ENCODE measurements at regions of chr6 and their contacts with region 1.

Region 1: DNA sequence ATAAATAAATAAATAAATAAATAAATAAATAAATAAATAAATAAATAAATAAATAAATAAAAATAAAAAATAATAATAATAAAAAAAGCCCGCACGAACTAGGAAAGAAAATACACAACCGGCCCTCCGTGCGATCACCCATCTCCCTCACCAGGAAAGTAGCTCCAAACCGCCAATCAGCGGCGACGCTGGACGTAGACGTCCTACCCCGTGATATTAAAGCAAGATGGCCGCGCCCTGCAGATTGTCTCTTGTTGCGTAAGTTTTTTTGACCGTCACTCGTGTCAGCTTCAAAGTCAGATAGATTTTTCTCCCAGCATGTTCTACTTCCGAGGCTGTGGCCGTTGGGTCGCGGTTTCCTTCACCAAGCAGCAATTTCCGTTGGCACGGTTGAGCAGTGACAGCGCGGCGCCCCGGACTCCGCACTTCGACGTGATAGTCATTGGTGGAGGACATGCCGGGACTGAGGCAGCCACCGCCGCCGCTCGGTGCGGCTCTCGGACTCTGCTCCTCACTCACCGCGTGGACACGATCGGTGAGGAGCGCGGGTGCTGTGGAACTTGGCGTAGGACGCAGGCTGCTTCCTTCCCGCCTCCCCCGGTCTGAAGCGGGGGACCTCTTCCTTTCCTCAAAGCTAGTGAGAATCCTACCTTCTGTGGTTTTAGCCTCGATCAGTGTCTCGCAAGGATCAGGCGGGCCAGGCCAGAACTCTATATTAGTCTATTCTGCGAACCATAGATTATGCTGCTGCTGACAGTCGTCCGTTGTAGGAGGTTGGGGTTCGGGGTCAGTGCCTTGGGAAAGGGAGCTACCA is at the start of gene MTO1:
- DNase-seq: peak; percentile 89
- H3K4me3 Mint-ChIP-seq: peak within 1 kb of the TSS; percentile 98
- H3K27ac Mint-ChIP-seq: peak within 1 kb of the TSS; percentile 99
- H3K4me1 Mint-ChIP-seq: peaks cover 54% of the 10 kb centered on the region
- H3K27me3 Mint-ChIP-seq: no peaks in the 10 kb centered on the region
- total RNA-seq, gene MTO1: 50.9 to 59.6 TPM

Region 2: DNA sequence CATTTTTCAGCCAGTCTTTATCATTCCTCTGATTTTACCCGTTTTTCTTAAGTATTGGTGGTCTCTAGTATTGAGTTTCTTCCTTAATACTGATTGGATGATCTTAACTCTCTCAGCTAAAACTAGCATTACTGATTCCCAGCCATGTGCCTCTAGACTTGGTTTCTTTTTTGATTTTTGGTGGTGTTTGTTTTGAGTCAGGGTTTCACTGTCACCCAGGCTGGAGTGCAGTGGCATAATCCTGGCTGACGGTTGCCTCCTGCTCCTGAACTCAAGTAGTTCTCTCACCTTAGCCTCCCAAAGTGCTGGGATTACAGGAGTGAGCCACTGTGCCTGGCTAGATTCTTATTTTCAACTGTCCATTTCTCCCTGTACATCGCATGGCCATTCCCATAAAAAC is 132.5 kb before region 1 on chr6:
- CTCF ChIA-PET with region 1: no interaction called
- POLR2A ChIA-PET with region 1: no interaction called
- DNase-seq: no peak
- H3K4me3 Mint-ChIP-seq: no peak overlapping the region
- H3K27ac Mint-ChIP-seq: no peak overlapping the region
- H3K4me1 Mint-ChIP-seq: peaks cover 7% of the 10 kb centered on the region
- H3K27me3 Mint-ChIP-seq: peaks cover 30% of the 10 kb centered on the region

Region 3: DNA sequence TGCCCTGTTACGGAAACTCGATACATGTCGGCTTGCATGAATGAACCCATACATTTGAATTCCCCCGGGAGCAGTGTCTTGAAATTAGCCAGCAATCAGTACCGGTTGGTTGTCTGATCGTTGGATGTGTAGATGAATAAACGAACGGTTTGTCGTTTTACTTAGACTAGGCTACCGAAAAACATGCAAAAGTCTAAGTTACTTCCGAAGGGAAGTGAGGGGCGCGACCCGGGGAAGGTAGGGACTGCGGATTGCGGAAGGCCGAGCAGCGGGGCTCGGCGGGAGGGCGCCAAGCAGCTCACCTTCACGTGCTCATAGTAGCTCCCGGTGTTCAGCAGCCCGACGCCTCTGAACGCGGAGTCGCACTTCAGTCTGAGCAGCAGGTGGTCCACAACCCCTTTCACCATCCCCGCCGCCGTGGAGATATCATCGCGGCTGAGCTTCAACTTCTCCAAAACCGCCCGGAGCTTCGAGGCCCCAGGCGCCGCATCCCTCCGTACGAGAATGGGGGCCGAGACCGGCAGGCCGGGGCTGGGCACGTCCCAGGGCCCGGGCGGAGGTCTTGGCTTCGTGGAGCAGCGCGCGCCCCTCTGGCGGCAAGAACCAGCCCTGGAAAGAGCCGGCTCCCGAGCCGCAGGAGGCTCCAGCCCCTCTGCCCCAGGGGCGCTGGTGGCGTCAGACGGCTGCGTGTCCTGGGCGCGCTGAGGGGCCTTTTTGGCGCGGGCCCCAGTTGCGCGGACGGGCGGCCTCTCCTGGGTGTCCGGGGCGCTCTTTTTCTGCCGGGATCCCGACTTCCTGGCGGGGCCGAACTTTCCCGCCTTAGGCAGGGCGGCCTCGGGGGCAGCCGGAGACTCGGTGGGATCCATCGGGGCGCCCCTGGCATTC is 10.3 kb before region 1 on chr6:
- CTCF ChIA-PET with region 1: interaction called, 21 read pairs
- POLR2A ChIA-PET with region 1: interaction called, 27 read pairs
- DNase-seq: peak; percentile 47
- H3K4me3 Mint-ChIP-seq: peak overlapping the region; percentile 95
- H3K27ac Mint-ChIP-seq: peak overlapping the region; percentile 94
- H3K4me1 Mint-ChIP-seq: peaks cover 49% of the 10 kb centered on the region
- H3K27me3 Mint-ChIP-seq: no peaks in the 10 kb centered on the region

Region 4: DNA sequence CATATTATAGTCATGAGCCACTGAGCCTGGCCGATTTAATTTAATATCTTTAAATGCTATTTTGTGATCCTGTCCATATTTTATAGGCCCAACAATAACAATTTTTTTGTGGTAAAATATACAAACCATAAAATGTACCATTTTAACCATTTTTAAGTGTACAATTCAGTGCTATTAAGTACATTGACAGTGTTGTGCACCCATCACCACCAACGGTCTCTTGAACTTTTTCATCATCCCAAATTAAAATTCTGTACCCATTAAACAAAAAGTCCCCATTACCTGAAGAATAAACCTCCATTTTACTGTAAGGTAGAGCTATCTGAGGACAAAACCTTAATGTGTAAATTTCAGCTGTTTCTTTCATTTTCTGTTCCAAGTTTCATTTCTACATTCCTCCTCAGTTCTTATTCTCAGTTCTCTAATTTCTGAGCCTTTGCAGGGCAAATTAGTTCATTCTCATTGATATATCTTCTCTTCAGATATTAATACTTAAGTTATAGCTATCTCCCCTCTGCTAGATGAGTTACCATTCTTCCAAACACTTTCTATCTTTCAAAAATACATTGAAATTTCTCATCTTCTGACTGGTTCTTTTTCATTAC is 10.0 kb after region 1 on chr6:
- CTCF ChIA-PET with region 1: interaction called, 19 read pairs
- POLR2A ChIA-PET with region 1: interaction called, 4 read pairs
- DNase-seq: no peak
- H3K4me3 Mint-ChIP-seq: peak overlapping the region; percentile 50
- H3K27ac Mint-ChIP-seq: peak overlapping the region; percentile 85
- H3K4me1 Mint-ChIP-seq: peaks cover 22% of the 10 kb centered on the region
- H3K27me3 Mint-ChIP-seq: no peaks in the 10 kb centered on the region

Region 5: GRCh38 chr6:73866305-73866704 is 404.6 kb after region 1 on chr6:
- CTCF ChIA-PET with region 1: no interaction called
- POLR2A ChIA-PET with region 1: no interaction called
- DNase-seq: no peak
- H3K4me3 Mint-ChIP-seq: no peak overlapping the region
- H3K27ac Mint-ChIP-seq: no peak overlapping the region
- H3K4me1 Mint-ChIP-seq: no peaks in the 10 kb centered on the region
- H3K27me3 Mint-ChIP-seq: no peaks in the 10 kb centered on the region